ENCODE measurements at regions of chr9 and their contacts with region 1.

Region 1: DNA sequence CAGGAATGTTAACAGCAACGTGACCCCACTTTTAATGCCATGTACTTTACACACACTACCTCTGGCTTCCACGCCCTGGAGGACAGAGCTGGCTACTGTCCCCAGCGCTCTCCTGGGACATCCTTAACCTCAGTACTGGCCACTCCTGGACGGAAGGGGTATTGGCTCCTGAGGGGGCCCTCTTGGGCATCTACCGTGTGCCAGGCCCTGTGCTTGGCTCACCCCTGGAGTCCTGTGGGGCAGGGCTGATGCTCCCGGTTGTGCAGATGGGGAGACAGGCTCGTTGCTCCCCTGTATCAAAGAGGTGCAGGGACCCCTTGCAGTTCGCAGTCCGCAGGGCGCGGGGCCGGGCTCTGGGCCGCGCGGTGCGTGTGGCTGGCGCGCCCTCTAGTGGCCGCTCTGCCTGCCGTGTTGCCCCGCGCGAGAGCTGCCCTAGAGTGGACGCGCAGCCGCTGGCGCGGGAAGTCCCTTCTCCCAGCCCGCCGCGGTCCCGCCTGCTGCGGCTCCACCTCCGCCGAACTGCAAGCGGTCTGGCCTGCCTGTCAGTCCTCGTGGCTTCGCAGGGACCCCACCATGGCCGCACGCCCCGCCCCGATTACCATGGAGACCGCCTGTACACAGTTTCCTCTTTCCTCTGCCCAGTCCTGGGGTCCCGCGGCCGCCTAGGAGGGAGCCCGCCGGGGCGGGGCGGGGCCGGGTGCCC is at the start of gene WDR38:
- DNase-seq: peak; percentile 83 to 85
- H3K4me3 ChIP-seq: peak within 1 kb of the TSS; percentile 47
- H3K4me3 Mint-ChIP-seq: peak within 1 kb of the TSS; percentile 75
- H3K27ac Mint-ChIP-seq: peak within 1 kb of the TSS; percentile 76
- H3K4me1 ChIP-seq: peaks cover 7% of the 10 kb centered on the region; the same call in 1 of the 2 replicates
- H3K4me1 Mint-ChIP-seq: peaks cover 6% of the 10 kb centered on the region
- H3K27me3 ChIP-seq: no peaks in the 10 kb centered on the region
- H3K27me3 Mint-ChIP-seq: no peaks in the 10 kb centered on the region
- CTCF ChIP-seq: peak; percentile 78 to 99
- total RNA-seq, gene WDR38: not detected in 2 replicates

Region 2: GRCh38 chr9:124764774-124765438 is 88.1 kb before region 1 on chr9:
- CTCF ChIA-PET with region 1: interaction called, 325 read pairs
- POLR2A ChIA-PET with region 1: interaction called, 3 read pairs
- intact Hi-C with region 1: no loop called
- DNase-seq: no peak
- H3K4me3 ChIP-seq: no peak overlapping the region
- H3K4me3 Mint-ChIP-seq: no peak overlapping the region
- H3K27ac Mint-ChIP-seq: no peak overlapping the region
- H3K4me1 ChIP-seq: no peaks in the 10 kb centered on the region
- H3K4me1 Mint-ChIP-seq: peaks cover 9% of the 10 kb centered on the region
- H3K27me3 ChIP-seq: no peaks in the 10 kb centered on the region
- H3K27me3 Mint-ChIP-seq: no peaks in the 10 kb centered on the region
- CTCF ChIP-seq: peak in 1 of 2 experiments; percentile 36

Region 3: DNA sequence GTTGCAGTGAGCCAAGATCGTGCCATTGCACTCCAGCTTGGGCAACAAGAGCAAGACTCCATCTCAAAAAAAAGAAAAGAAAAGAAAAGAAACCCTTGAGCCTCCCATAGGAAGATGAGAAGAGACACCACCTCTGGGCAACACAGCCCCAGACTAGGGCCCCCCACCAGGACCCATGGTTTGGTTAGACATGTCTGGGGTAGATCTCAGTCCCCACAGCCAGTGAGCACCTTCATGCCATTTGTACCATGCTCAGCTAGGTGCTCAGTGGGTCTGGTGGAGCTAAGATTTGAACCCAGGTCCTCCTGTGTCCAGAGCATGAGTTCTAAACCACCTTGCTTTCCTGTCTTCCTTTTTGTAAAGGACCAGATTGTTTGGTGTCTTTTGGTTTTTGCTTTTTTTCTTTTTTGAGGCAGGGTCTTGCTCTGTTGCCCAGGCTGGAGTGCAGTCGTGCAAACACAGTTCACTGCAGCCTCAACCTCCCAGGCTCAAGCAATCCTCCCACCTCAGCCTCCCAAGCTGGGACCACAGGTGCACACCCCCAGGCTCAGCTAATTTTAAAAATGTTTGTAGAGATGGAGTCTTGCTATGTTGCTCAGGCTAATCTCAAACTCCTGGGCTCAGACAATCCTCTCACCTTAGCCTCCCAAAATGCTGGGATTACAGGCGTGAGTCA is 64.3 kb before region 1 on chr9:
- CTCF ChIA-PET with region 1: interaction called, 13 read pairs
- POLR2A ChIA-PET with region 1: no interaction called
- intact Hi-C with region 1: no loop called
- DNase-seq: peak in 1 of 2 experiments; percentile 6
- H3K4me3 ChIP-seq: no peak overlapping the region
- H3K4me3 Mint-ChIP-seq: no peak overlapping the region
- H3K27ac Mint-ChIP-seq: no peak overlapping the region
- H3K4me1 ChIP-seq: no peaks in the 10 kb centered on the region
- H3K4me1 Mint-ChIP-seq: no peaks in the 10 kb centered on the region
- H3K27me3 ChIP-seq: no peaks in the 10 kb centered on the region
- H3K27me3 Mint-ChIP-seq: no peaks in the 10 kb centered on the region
- CTCF ChIP-seq: no peak

Region 4: DNA sequence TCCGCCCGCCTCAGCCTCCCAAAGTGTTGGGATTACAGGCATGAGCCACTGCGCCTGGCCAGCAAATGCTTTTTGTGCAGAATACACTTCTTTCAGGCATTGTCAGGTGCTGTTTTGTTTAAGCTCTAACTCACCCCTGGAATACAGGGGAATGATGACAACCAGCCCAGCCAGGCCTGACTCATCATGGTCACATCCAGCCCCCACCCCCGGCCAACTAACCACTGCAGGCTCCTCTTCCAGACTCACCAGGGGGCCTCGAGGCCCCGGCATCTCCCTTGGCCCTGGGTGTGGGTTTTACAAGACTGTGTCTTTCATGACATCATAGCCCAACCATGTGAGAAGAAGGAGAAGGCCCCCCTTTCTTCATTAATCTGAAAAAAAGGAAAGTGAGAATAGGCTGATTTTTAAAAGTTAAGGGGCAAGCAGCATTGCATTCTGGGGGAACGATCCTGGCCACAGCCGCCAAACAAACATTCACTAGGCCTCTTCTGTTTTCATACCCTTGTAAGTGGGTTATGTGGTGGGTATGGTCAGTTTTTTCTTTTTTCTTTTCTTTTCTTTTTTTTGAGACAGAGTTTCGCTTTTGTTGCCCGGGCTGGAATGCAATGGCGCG is 40.5 kb before region 1 on chr9:
- CTCF ChIA-PET with region 1: interaction called, 15 read pairs
- POLR2A ChIA-PET with region 1: no interaction called
- intact Hi-C with region 1: no loop called
- DNase-seq: peak; percentile 65 to 77
- H3K4me3 ChIP-seq: no peak overlapping the region
- H3K4me3 Mint-ChIP-seq: no peak overlapping the region
- H3K27ac Mint-ChIP-seq: peak overlapping the region; percentile 86
- H3K4me1 ChIP-seq: peaks cover 34% of the 10 kb centered on the region
- H3K4me1 Mint-ChIP-seq: peaks cover 30% of the 10 kb centered on the region
- H3K27me3 ChIP-seq: no peaks in the 10 kb centered on the region
- H3K27me3 Mint-ChIP-seq: no peaks in the 10 kb centered on the region
- CTCF ChIP-seq: no peak

Region 5: DNA sequence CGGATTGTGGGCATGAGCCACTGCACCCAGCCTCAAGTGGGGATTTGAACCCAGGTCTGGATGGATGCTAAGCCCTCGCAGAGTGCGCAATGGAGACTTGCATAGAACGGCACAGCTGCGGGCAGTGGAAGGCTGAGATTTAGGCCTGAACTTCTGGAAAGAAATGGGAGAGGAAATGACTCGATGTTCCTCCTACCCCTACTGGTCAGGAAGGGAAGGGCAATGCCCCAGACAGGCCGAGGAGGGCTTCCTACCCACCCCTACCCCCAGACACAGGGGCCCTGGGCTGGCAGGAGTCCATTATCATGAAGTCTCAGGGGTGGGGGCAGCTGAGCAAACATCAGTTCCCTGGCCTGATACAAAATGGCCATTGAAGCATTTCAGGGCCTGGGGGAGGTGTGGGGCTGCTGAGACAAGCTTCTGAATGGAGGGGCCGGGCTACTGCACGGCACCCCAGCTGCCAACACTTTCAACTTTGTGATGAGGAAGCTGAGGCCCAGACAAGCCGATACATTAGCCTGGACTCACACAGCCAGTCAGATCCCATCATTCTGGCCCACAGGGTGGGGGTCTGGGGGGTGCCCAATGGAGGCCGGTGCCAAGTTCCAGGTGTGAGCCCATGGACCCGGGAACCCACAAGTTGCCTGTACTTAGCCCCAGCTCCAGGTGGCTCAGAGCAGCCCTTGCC is 13.2 kb before region 1 on chr9:
- CTCF ChIA-PET with region 1: interaction called, 17 read pairs
- POLR2A ChIA-PET with region 1: interaction called, 3 read pairs
- intact Hi-C with region 1: no loop called
- DNase-seq: peak; percentile 42
- H3K4me3 ChIP-seq: no peak overlapping the region
- H3K4me3 Mint-ChIP-seq: no peak overlapping the region
- H3K27ac Mint-ChIP-seq: peak overlapping the region; percentile 51
- H3K4me1 ChIP-seq: 0 out of 2 replicates have a peak, but pooled peaks cover 3% of the 10 kb centered on the region
- H3K4me1 Mint-ChIP-seq: no peaks in the 10 kb centered on the region
- H3K27me3 ChIP-seq: no peaks in the 10 kb centered on the region
- H3K27me3 Mint-ChIP-seq: no peaks in the 10 kb centered on the region
- CTCF ChIP-seq: peak; percentile 34 to 57